Vagina (tissue), 2 donors: ENCODE measurements at regions of chr14 and their contacts with region 1.

Region 1: GRCh38 chr14:36070031-36070719 is 106.3 kb downstream of the PTCSC3 start:
- DNase-seq: no peak
- H3K4me3 ChIP-seq: no peak overlapping the region
- H3K27ac ChIP-seq: no peak overlapping the region
- H3K4me1 ChIP-seq: no peaks in the 10 kb centered on the region
- H3K27me3 ChIP-seq: no peaks in the 10 kb centered on the region
- CTCF ChIP-seq: no peak
- POLR2A ChIP-seq: no peak

Region 2: GRCh38 chr14:34280562-34280961 is 1789.6 kb before region 1 on chr14:
- intact Hi-C with region 1: loop called (anchors 10 kb)
- DNase-seq: no peak
- H3K4me3 ChIP-seq: no peak overlapping the region
- H3K27ac ChIP-seq: no peak overlapping the region
- H3K4me1 ChIP-seq: no peaks in the 10 kb centered on the region
- H3K27me3 ChIP-seq: no peaks in the 10 kb centered on the region
- CTCF ChIP-seq: no peak
- POLR2A ChIP-seq: no peak